Activated CD4-positive, alpha-beta T cell treated with anti-CD3 and anti-CD28 coated beads, Interleukin-2, amount 10 ng/mL, durations not matched to agents 24 days and 14 days (primary cell): ENCODE measurements at regions of chr1 and their contacts with region 1.

Region 1: DNA sequence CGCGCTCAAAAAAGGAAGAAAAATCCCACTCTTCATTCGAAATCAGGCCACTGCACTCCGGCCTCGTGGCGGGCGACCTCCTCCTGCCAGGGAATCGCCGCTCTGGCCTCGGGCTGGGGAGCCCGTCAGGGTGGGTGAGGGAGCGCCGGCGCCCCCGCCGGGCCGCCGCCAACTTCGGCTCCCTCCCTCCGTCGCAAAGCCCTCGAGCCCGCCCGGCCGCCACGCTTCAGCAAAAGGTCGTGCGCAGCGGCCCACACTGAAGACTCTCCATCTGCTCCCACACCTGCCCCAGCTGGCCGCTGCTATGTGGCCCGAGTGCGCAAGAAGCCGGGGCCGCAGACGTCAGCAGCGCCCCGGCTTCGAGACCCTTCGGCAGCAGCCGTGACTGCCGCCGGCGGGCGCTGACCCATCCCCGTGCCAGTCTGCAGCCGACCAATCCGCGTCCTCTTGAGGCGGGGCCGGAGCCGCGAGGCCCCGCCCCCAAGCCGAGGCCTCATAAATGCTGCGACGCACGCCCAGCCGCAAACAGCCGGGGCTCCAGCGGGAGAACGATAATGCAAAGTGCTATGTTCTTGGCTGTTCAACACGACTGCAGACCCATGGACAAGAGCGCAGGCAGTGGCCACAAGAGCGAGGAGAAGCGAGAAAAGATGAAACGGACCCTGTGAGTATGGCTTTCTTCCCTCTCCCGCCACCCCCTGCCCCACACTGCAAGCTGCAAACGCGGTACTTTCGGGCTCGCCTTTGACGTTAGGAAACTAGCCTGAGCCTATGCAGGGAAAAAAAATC is at the start of gene RGS2:
- DNase-seq: peak; percentile 96
- H3K4me3 Mint-ChIP-seq: peak within 1 kb of the TSS; percentile 95
- H3K27ac Mint-ChIP-seq: peak within 1 kb of the TSS; percentile 96
- H3K4me1 Mint-ChIP-seq: peaks cover 35% of the 10 kb centered on the region
- H3K27me3 Mint-ChIP-seq: peaks cover 7% of the 10 kb centered on the region
- total RNA-seq, gene RGS2: 5.2 and 6.7 TPM in 2 replicates

Region 2: DNA sequence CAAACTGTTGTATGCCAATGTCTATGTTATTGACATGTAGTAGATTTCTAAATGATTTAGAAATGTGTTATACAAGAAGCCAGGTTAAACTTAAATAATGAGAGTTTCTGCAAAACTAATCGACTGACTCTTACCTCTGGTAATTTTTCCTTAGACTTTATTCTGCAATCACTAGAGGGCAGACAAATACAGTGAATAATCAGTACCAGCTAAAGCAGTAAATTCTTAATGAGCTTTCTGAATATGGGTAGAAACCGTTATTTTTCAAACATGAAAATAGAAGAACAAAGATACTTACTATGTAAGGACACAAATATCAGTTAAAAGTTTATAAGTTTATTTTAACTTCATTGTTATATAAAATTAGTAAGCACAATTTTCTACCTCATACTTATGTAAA is 331.1 kb before region 1 on chr1:
- intact Hi-C with region 1: loop called (anchors 2 kb)
- DNase-seq: no peak
- H3K4me3 Mint-ChIP-seq: no peak overlapping the region
- H3K27ac Mint-ChIP-seq: no peak overlapping the region
- H3K4me1 Mint-ChIP-seq: peaks cover 2% of the 10 kb centered on the region
- H3K27me3 Mint-ChIP-seq: peaks cover 7% of the 10 kb centered on the region

Region 3: GRCh38 chr1:192639607-192640368 is 168.9 kb before region 1 on chr1:
- intact Hi-C with region 1: loop called (anchors 2 kb)
- DNase-seq: no peak
- H3K4me3 Mint-ChIP-seq: no peak overlapping the region
- H3K27ac Mint-ChIP-seq: no peak overlapping the region
- H3K4me1 Mint-ChIP-seq: peaks cover 4% of the 10 kb centered on the region
- H3K27me3 Mint-ChIP-seq: peaks cover 4% of the 10 kb centered on the region

Region 4: GRCh38 chr1:192652159-192652558 is 156.6 kb before region 1 on chr1:
- intact Hi-C with region 1: no loop called
- DNase-seq: no peak
- H3K4me3 Mint-ChIP-seq: no peak overlapping the region
- H3K27ac Mint-ChIP-seq: no peak overlapping the region
- H3K4me1 Mint-ChIP-seq: no peaks in the 10 kb centered on the region
- H3K27me3 Mint-ChIP-seq: no peaks in the 10 kb centered on the region

Region 5: GRCh38 chr1:192983349-192983980 is 174.8 kb after region 1 on chr1:
- intact Hi-C with region 1: loop called (anchors 1 kb)
- DNase-seq: peak; percentile 69
- H3K4me3 Mint-ChIP-seq: peak overlapping the region; percentile 36
- H3K27ac Mint-ChIP-seq: peak overlapping the region; percentile 78
- H3K4me1 Mint-ChIP-seq: peaks cover 47% of the 10 kb centered on the region
- H3K27me3 Mint-ChIP-seq: no peaks in the 10 kb centered on the region

Region 6: GRCh38 chr1:193059268-193060225 is 250.8 kb after region 1 on chr1 and contains the starts of genes RO60 and UCHL5:
- intact Hi-C with region 1: loop called (anchors 1 kb)
- DNase-seq: peak; percentile 98
- H3K4me3 Mint-ChIP-seq: peak within 1 kb of the TSS; percentile 98
- H3K27ac Mint-ChIP-seq: peak within 1 kb of the TSS; percentile 99
- H3K4me1 Mint-ChIP-seq: peaks cover 47% of the 10 kb centered on the region
- H3K27me3 Mint-ChIP-seq: no peaks in the 10 kb centered on the region
- total RNA-seq, gene RO60: 70.2 and 70.9 TPM in 2 replicates
- total RNA-seq, gene UCHL5: 89.2 and 97.2 TPM in 2 replicates

Region 7: GRCh38 chr1:193121616-193122593 is 313.2 kb after region 1 on chr1 and contains the start of gene CDC73:
- intact Hi-C with region 1: loop called (anchors 1 kb)
- DNase-seq: peak; percentile 99
- H3K4me3 Mint-ChIP-seq: peak within 1 kb of the TSS; percentile 100
- H3K27ac Mint-ChIP-seq: peak within 1 kb of the TSS; percentile 95
- H3K4me1 Mint-ChIP-seq: peaks cover 43% of the 10 kb centered on the region
- H3K27me3 Mint-ChIP-seq: peaks cover 10% of the 10 kb centered on the region
- total RNA-seq, gene CDC73: 55.2 and 56.0 TPM in 2 replicates

Region 8: GRCh38 chr1:194295685-194296084 is 1487.0 kb after region 1 on chr1:
- intact Hi-C with region 1: loop called (anchors 10 kb)
- DNase-seq: peak; percentile 82
- H3K4me3 Mint-ChIP-seq: no peak overlapping the region
- H3K27ac Mint-ChIP-seq: no peak overlapping the region
- H3K4me1 Mint-ChIP-seq: peaks cover 9% of the 10 kb centered on the region
- H3K27me3 Mint-ChIP-seq: no peaks in the 10 kb centered on the region